ENCODE measurements at regions of chr10 and their contacts with region 1.

Region 1: GRCh38 chr10:112631501-112632410 is 184.7 kb downstream of the VTI1A start:
- DNase-seq: no peak
- H3K4me3 ChIP-seq: no peak overlapping the region
- H3K27ac ChIP-seq: no peak overlapping the region
- H3K4me1 ChIP-seq: peaks cover 16% of the 10 kb centered on the region
- H3K27me3 ChIP-seq: no peaks in the 10 kb centered on the region
- CTCF ChIP-seq: no peak
- POLR2A ChIP-seq: no peak

Region 2: DNA sequence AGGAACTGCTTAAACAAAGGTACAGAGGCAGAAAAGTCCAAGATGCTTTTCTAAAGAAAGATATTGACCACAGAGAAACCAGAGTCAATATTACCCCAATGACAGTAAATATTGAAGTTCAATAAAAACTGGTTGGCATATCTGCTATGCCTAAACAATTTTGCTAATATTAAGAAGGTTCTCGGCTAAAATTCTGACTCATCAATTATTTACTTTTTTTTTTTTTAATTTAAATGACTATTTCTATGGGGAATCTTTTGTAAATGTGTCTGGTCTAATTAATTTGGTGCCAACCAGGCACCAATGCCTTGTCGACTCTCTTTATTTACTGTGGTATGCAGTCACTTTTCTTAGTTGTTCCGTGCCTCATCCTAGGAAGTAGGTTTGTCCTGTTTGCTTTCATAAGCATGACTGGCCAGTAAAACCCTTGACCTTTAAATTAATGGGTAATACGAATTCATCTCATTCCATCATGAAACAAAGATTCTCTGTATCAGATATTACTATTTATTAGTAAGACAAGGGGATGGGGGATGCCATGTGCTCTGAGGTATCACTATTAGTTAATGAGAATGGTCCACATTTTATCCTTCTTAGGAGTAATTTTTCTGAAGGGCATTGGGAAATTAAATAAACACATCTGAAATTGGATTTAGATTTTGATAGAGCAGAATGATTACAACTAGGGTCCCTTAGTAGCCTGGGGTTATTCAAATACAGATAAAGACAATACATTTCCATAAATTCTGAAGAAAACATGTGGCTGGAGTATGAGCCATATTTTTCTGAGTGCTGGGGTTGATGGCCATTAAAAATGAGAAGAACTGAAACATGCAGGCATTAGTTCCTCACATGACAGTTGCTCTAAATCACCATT is 30.3 kb before region 1 on chr10:
- intact Hi-C with region 1: loop called (anchors 1 kb)
- DNase-seq: no peak
- H3K4me3 ChIP-seq: no peak overlapping the region
- H3K27ac ChIP-seq: no peak overlapping the region
- H3K4me1 ChIP-seq: no peaks in the 10 kb centered on the region
- H3K27me3 ChIP-seq: no peaks in the 10 kb centered on the region
- CTCF ChIP-seq: no peak
- POLR2A ChIP-seq: no peak

Region 3: GRCh38 chr10:112755446-112756237 is 123.9 kb after region 1 on chr10:
- intact Hi-C with region 1: no loop called
- DNase-seq: no peak
- H3K4me3 ChIP-seq: no peak overlapping the region
- H3K27ac ChIP-seq: no peak overlapping the region
- H3K4me1 ChIP-seq: no peaks in the 10 kb centered on the region
- H3K27me3 ChIP-seq: no peaks in the 10 kb centered on the region
- CTCF ChIP-seq: no peak
- POLR2A ChIP-seq: no peak

Region 4: GRCh38 chr10:112977426-112977898 is 345.7 kb after region 1 on chr10:
- intact Hi-C with region 1: no loop called
- DNase-seq: no peak
- H3K4me3 ChIP-seq: no peak overlapping the region
- H3K27ac ChIP-seq: no peak overlapping the region
- H3K4me1 ChIP-seq: peaks cover 9% of the 10 kb centered on the region
- H3K27me3 ChIP-seq: no peaks in the 10 kb centered on the region
- CTCF ChIP-seq: no peak
- POLR2A ChIP-seq: no peak

Region 5: DNA sequence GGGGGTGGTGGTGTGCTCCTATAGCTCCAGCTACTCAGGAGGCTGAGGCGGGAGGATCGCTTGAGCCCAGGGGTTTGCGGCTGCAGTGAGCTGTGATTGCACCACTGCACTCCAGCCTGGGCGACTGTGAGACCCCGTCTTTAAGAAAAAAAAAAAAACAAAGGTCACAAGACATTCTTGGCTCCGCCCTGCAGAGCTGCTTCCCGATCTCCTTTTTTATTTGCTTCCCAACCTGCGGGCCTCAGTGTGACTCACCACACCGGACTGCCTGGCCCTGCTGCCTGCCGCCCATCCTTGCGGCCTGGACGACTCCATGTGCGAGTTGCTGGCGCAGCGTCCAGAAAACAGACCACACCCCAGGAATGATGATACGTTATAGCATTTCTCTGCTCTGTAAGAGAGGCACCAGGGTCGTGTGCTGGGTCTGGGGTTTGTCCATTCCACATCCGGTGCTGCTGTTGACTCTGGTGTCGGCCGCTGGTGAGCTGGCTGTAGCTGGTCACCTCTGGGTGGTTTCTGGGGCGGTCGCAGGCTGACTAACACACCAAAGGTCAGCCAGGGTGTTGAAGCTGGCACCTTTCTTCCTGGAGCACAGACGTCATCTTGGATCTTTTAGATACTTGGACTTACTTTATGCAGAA is 441.9 kb after region 1 on chr10:
- intact Hi-C with region 1: loop called (anchors 5 kb)
- DNase-seq: no peak
- H3K4me3 ChIP-seq: peak overlapping the region in 1 of 2 donors; percentile 6
- H3K27ac ChIP-seq: peak overlapping the region; percentile 7
- H3K4me1 ChIP-seq: peaks cover 22% of the 10 kb centered on the region
- H3K27me3 ChIP-seq: no peaks in the 10 kb centered on the region
- CTCF ChIP-seq: no peak
- POLR2A ChIP-seq: no peak